ENCODE measurements at regions of chr2 and their contacts with region 1.

Region 1: DNA sequence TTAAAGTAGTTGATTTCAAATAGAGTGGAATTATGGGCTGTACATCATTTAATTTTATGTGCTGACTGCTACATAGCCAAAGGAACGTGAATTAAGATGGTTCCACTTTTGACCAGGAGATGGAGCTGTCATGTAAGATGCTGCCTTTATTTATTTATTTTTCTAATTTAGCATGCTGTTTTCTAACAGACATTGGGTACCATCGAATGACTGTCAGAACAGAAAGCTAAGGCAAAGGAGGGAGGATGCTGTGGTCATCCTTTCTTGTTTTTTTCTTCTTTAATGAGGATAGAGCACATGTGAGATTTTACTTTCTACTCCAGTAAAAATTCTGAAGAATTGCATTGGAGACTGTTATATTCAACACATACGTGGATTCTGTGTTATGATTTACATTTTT is at the start of gene SCN2A:
- DNase-seq: peak in 1 of 2 experiments; percentile 54
- H3K4me3 ChIP-seq: no peak within 1 kb of the TSS
- H3K4me3 Mint-ChIP-seq: no peak within 1 kb of the TSS
- H3K27ac Mint-ChIP-seq: no peak within 1 kb of the TSS
- H3K4me1 ChIP-seq: no peaks in the 10 kb centered on the region
- H3K4me1 Mint-ChIP-seq: no peaks in the 10 kb centered on the region
- H3K27me3 ChIP-seq: no peaks in the 10 kb centered on the region
- H3K27me3 Mint-ChIP-seq: peaks cover 5% of the 10 kb centered on the region
- CTCF ChIP-seq: peak; percentile 62 to 89
- total RNA-seq, gene SCN2A: not detected in 2 replicates

Region 2: DNA sequence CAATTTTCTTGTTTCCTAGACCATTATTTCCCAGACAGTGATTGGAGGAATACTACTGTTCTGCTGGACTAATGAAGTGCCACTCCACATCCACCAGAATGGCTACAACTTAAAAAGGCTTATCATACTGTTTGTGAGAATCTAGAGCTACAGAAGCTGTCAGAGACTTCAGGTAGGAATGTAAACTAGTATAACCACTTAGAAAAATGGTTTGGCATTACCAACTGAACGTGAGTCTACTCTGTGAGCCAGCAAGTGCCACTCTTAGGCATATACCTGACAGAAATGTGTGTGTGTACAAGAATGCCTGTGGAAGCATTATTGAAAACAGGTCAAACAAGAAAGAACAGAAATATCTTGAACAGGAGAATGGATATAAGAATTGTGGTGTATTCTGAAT is 31.1 kb before region 1 on chr2:
- CTCF ChIA-PET with region 1: no interaction called
- POLR2A ChIA-PET with region 1: no interaction called
- intact Hi-C with region 1: no loop called
- DNase-seq: no peak
- H3K4me3 ChIP-seq: no peak overlapping the region
- H3K4me3 Mint-ChIP-seq: no peak overlapping the region
- H3K27ac Mint-ChIP-seq: no peak overlapping the region
- H3K4me1 ChIP-seq: no peaks in the 10 kb centered on the region
- H3K4me1 Mint-ChIP-seq: no peaks in the 10 kb centered on the region
- H3K27me3 ChIP-seq: no peaks in the 10 kb centered on the region
- H3K27me3 Mint-ChIP-seq: peaks cover 5% of the 10 kb centered on the region
- CTCF ChIP-seq: no peak

Region 3: DNA sequence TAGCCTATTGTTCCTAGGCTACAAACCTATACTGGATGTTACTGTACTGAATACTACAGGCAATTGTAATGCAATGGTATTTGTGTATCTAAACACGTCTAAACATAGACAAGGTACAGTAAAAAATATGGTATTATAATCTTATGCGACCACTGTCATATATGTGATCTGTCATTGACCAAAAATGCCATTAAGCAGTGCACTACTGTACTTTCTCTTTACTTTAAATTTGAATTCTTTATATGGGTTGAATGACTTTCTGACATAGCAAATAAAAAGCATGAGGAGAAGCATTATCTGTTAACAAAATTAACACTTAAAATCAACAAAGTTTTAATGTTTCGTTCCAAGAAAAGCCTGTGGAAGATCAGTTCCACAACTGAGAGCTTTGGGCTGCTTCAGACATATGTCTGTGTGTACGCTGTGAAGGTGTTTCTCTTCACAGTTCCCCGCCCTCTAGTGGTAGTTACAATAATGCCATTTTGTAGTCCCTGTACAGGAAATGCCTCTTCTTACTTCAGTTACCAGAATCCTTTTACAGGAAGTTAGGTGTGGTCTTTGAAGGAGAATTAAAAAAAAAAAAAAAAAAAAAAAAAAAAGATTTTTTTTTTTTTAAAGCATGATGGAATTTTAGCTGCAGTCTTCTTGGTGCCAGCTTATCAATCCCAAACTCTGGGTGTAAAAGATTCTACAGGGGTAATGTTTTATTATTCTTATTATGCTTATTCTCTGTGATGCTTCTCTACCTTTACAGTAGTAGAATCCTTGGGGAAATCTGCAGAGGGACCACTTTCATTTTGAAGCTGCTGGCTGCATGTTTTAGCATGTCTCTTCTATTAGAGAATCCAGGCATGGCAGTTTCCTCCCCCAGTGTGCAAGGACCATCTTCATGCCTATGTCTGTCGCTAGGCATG is 54.5 kb after region 1 on chr2:
- CTCF ChIA-PET with region 1: interaction called, 3 read pairs
- POLR2A ChIA-PET with region 1: no interaction called
- intact Hi-C with region 1: loop called (anchors 1 kb)
- DNase-seq: peak; percentile 60 to 85
- H3K4me3 ChIP-seq: no peak overlapping the region
- H3K4me3 Mint-ChIP-seq: no peak overlapping the region
- H3K27ac Mint-ChIP-seq: no peak overlapping the region
- H3K4me1 ChIP-seq: no peaks in the 10 kb centered on the region
- H3K4me1 Mint-ChIP-seq: no peaks in the 10 kb centered on the region
- H3K27me3 ChIP-seq: no peaks in the 10 kb centered on the region
- H3K27me3 Mint-ChIP-seq: peaks cover 15% of the 10 kb centered on the region
- CTCF ChIP-seq: peak; percentile 50 to 83

Region 4: DNA sequence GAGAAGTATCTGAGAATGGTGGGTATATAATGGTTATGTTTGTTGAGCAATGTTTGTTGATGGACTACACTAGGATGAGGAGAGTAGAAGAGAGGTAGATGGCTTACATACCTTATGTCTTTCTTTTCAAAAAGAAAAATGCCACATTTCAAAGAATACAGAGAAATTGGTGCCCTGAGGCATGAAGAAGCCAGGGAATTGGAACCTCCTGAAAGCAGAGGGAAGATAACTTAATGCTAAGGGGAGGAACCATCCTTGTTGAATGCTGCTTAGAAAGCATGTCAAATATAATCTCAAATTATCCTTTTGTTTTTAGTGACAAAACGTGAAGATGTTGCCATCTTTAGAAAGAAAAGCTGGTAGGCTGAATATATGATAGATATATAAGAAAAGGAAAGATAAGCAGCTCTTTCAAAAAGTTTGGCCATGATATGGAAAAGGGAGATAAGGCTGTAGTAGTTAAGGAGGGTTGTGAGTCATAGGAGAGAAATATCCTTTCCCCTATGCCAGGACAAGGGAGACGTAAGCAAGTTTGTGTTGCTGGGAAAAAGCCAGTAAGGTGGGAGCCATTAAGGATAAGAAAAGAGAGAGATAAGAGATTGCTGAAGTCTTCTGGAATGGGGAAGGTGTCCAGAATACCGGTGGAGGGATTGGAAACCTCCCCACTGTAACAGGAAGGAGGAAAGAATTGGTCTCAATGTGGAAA is 66.3 kb after region 1 on chr2:
- CTCF ChIA-PET with region 1: no interaction called
- POLR2A ChIA-PET with region 1: no interaction called
- intact Hi-C with region 1: loop called (anchors 1 kb)
- DNase-seq: no peak
- H3K4me3 ChIP-seq: no peak overlapping the region
- H3K4me3 Mint-ChIP-seq: no peak overlapping the region
- H3K27ac Mint-ChIP-seq: no peak overlapping the region
- H3K4me1 ChIP-seq: 0 out of 2 replicates have a peak, but pooled peaks cover 4% of the 10 kb centered on the region
- H3K4me1 Mint-ChIP-seq: peaks cover 8% of the 10 kb centered on the region
- H3K27me3 ChIP-seq: no peaks in the 10 kb centered on the region
- H3K27me3 Mint-ChIP-seq: no peaks in the 10 kb centered on the region
- CTCF ChIP-seq: no peak

Region 5: GRCh38 chr2:165348441-165348840 is 109.2 kb after region 1 on chr2:
- CTCF ChIA-PET with region 1: no interaction called
- POLR2A ChIA-PET with region 1: no interaction called
- intact Hi-C with region 1: no loop called
- DNase-seq: no peak
- H3K4me3 ChIP-seq: no peak overlapping the region
- H3K4me3 Mint-ChIP-seq: no peak overlapping the region
- H3K27ac Mint-ChIP-seq: no peak overlapping the region
- H3K4me1 ChIP-seq: no peaks in the 10 kb centered on the region
- H3K4me1 Mint-ChIP-seq: no peaks in the 10 kb centered on the region
- H3K27me3 ChIP-seq: no peaks in the 10 kb centered on the region
- H3K27me3 Mint-ChIP-seq: peaks cover 3% of the 10 kb centered on the region
- CTCF ChIP-seq: no peak

Region 6: GRCh38 chr2:165390875-165391274 is 151.6 kb after region 1 on chr2:
- CTCF ChIA-PET with region 1: no interaction called
- POLR2A ChIA-PET with region 1: no interaction called
- intact Hi-C with region 1: loop called (anchors 10 kb)
- DNase-seq: no peak
- H3K4me3 ChIP-seq: no peak overlapping the region
- H3K4me3 Mint-ChIP-seq: no peak overlapping the region
- H3K27ac Mint-ChIP-seq: no peak overlapping the region
- H3K4me1 ChIP-seq: no peaks in the 10 kb centered on the region
- H3K4me1 Mint-ChIP-seq: no peaks in the 10 kb centered on the region
- H3K27me3 ChIP-seq: no peaks in the 10 kb centered on the region
- H3K27me3 Mint-ChIP-seq: peaks cover 11% of the 10 kb centered on the region
- CTCF ChIP-seq: no peak

Region 7: DNA sequence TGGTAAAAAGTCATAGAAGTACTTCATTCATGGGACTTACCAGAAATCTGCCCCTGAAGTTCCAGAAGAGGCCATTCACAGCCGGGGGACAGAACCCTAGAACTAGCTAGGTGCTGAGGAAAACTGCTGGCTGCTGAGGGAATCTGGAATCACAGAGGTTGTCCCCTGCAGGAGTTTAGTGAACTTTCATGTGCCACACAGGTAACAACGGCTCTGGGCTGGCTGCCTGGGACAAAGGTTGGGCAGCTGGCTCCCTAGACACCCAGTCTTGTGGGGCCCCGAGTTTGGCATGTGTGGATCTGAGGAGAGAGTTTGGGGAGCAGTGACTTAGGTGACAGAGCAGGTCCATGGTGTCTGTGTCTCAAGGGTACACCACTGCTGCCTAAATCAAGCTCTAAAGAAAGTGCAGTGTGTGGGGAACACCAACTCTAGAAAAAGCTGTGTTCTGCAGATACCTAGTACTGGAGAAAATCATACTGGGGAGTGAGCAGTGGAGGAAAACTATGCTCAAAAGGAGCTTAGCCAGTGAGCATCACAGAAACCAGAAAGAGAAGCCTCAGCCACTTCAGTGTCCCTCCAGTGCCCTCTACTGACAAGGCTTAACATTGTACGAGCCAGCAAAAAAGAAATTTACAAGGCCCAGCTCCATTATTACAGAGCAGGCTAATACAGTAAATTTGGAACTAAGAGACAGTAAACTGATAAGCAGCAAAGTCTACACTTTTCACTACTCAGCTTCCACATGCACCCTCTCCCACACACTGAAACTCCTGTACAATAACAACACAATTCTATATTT is 539.6 kb after region 1 on chr2:
- CTCF ChIA-PET with region 1: no interaction called
- POLR2A ChIA-PET with region 1: no interaction called
- intact Hi-C with region 1: loop called (anchors 1 kb)
- DNase-seq: peak in 1 of 2 experiments; percentile 57
- H3K4me3 ChIP-seq: no peak overlapping the region
- H3K4me3 Mint-ChIP-seq: no peak overlapping the region
- H3K27ac Mint-ChIP-seq: no peak overlapping the region
- H3K4me1 ChIP-seq: peaks cover 6% of the 10 kb centered on the region; the same call in 1 of the 2 replicates
- H3K4me1 Mint-ChIP-seq: peaks cover 7% of the 10 kb centered on the region
- H3K27me3 ChIP-seq: no peaks in the 10 kb centered on the region
- H3K27me3 Mint-ChIP-seq: no peaks in the 10 kb centered on the region
- CTCF ChIP-seq: peak; percentile 59 to 65

Region 8: DNA sequence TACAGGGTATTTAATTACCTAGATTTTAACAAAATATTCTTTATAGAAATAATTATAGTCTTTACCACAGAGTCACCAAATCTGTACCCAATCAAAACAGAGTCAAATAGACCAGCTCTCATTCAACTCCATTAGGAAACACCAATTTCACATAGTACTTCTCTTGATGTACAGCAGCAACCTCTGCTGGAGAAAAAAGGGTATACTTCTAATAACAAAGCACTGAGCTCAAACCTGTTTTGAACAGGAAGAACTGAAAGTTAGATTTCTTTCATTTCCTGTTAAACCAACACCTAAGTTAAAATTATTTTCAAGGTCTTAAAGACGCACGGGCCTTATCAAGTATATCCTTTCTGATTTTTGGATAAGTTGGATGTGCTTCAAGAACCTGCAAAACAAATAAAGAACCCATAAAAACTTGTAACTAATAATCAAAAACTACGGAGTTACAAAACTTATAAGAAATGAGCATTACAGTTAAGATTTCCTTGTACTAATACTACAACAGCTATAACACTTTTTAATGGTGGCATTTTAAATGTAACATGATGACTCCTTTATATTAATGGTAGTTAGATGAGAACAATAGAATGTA is 635.3 kb after region 1 on chr2:
- CTCF ChIA-PET with region 1: no interaction called
- POLR2A ChIA-PET with region 1: no interaction called
- intact Hi-C with region 1: loop called (anchors 1 kb)
- DNase-seq: peak in 1 of 2 experiments; percentile 42
- H3K4me3 ChIP-seq: no peak overlapping the region
- H3K4me3 Mint-ChIP-seq: no peak overlapping the region
- H3K27ac Mint-ChIP-seq: no peak overlapping the region
- H3K4me1 ChIP-seq: peaks cover 8% of the 10 kb centered on the region
- H3K4me1 Mint-ChIP-seq: peaks cover 12% of the 10 kb centered on the region
- H3K27me3 ChIP-seq: no peaks in the 10 kb centered on the region
- H3K27me3 Mint-ChIP-seq: no peaks in the 10 kb centered on the region
- CTCF ChIP-seq: peak; percentile 48 to 60

Measured in Caco-2 (cell line).